Posterior vena cava (tissue), 2 donors: ENCODE measurements at regions of chr3 and their contacts with region 1.

Region 1: DNA sequence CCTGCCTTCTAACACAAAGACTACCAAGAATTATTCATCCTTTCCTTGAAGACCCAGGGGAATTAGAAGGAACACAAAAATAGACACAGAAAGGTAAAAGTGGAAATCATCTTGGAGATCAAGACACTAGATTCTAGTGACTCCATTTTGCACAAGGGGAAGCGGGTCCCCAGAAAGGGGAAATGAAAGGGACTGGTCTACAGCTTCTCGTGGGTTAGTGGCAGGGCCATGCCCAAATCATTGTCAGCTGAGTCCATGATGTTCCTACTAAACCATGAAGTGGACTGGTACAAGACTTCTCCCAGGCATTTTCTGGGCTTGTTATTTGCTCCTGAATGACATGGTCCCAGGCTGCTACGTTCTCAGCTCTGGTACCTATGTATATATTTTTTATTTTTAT is 230.7 kb upstream of the TPRG1 start:
- DNase-seq: no peak

Region 2: GRCh38 chr3:188776447-188776846 is 164.7 kb before region 1 on chr3:
- intact Hi-C with region 1: loop called in 1 of 2 experiments (anchors 5 kb)
- DNase-seq: no peak

Region 3: DNA sequence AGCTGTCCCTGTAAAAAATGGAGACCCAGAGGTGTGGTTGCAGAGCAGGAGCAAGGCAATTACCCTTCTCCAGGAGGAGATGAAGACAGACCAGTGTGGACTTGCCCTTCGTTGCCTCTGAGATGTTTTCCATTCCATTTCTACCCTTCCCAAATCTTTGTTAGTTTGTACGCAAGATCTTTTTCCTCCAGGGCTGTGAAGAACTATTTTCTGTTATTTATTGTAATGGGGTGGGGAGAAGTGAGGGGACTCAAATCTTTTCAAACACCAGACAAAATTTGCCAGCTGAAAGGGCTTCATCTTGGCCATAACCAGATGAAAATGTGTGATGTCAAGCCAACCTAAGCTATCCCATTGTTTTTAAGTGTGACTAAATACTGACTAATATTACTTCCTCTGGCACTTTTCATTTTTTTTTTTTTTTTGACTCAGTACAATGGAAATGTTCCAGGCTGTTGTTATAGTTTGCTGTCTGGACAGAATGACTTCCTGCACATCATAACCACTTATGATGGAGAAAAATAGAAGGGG is 40.6 kb before region 1 on chr3:
- intact Hi-C with region 1: loop called in 1 of 2 experiments (anchors 5 kb)
- DNase-seq: no peak

Region 4: GRCh38 chr3:188911026-188911850 is 29.9 kb before region 1 on chr3:
- intact Hi-C with region 1: no loop called
- DNase-seq: no peak

Region 5: DNA sequence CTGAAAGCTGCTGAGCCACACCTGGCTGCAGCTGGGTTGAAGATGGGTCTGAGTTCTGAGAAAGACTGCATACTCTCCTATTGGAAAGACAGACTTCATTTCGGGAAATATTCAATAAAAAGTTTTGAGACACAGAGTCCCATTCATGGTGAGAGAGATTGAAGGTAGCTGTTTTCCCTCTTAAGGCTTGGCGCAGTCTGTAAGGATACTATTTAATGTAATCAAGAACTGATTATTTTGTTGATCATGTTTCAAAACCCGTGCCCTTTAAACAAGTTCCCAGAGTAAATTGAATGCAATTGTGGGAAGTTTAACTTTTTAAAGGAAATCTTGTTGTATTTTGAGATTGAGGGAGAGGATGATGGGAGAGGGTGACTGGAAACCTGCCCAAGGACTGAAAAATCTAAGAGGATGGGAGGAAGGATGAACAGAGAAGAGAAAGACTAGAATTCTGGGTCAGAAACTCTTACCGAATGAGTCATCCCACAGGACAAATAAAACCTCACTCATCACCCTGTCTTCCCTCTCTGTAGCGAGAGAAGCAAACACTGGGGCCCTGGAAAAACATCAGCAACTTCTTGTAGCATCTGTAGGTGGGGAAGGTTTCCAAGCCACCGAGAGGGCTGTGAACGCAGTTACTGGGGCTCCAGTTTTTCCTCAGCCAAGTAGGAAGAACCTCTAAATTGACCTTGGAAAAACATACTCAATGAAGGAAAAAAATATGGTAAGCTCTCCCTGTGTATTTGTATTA is 37.5 kb after region 1 on chr3:
- intact Hi-C with region 1: no loop called
- DNase-seq: no peak